CD8-positive, alpha-beta T cell (primary cell): ENCODE measurements at regions of chr19 and their contacts with region 1.

Region 1: DNA sequence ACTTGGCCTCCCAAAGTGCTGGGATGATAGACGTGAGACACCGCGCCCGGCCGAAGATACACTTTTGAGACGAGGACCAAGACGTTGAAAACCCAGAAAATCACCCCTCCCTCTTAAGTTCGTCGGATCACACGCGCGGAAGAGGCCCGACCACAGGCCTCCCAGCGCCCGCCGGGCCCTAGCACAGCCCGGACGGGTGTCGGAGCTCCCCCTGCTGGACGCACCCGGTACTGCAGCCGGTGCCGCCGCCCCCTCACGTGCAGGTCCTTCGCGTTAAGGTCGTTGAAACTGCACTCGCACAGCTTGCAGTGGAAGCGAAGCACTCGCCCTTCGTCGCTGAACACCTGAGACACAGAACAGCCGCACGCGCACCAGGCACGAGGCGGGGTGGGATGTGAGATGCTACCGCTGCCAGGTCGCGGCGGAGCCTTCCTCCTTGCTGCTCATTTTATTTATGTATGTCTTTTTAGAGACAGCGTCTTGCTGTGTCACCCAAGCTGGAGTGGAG is 35.7 kb upstream of the MATK start:
- DNase-seq: peak; percentile 84 to 98 (median 87)
- ATAC-seq: peak; percentile 99
- H3K4me3 ChIP-seq: peak overlapping the region in 1 of 2 experiments; percentile 30
- H3K4me3 Mint-ChIP-seq: peak overlapping the region; percentile 35
- H3K27ac ChIP-seq: no peak overlapping the region
- H3K27ac Mint-ChIP-seq: peak overlapping the region; percentile 64
- H3K4me1 ChIP-seq: peaks cover 32% of the 10 kb centered on the region
- H3K4me1 Mint-ChIP-seq: peaks cover 17% of the 10 kb centered on the region
- H3K27me3 ChIP-seq: no peaks in the 10 kb centered on the region
- H3K27me3 Mint-ChIP-seq: no peaks in the 10 kb centered on the region
- CTCF ChIP-seq: peak; percentile 98

Region 2: DNA sequence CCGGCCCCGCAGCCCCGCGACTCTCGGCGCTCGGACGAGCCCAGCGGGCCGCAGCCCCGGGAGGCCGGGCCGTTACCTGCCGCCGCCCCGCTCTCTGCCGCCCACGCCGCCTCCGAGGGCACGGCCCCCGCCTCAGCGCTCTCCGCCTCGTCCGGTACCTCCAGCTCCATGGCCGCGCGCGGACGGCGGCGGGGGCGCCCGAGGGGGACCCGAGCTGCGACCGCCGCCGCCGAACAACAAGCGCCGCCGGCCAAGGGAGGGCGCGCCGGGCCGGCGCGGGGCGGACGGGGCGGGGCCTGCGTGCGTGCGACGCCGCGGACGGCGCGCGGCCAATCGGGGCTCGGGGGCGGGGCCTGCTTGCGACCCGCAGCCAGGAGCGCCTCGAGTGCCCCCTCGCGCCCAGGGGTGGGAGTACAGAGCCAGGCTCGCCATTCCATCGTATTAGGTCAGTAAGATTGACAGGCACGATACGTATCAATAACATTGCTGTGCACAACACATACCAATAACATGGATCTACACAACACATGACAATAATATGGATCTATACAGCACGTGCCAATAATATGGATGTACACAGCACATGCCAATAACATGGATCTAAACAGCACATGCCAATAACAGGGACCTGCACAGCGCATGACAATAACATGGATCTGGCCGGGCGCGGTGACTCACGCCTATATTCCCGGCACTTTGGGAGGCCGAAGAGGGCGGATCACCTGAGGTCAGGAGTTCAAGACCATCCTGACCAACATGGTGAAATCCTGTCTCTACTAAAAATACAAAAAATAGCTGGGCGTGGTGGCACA is 121.5 kb before region 1 on chr19 and contains the start of gene PIP5K1C:
- CTCF ChIA-PET with region 1: interaction called, 4 read pairs
- POLR2A ChIA-PET with region 1: no interaction called
- intact Hi-C with region 1: loop called (anchors 5 kb)
- DNase-seq: peak; percentile 84 to 97 (median 92)
- ATAC-seq: peak; percentile 100
- H3K4me3 ChIP-seq: peak within 1 kb of the TSS; percentile 61 to 63
- H3K4me3 Mint-ChIP-seq: peak within 1 kb of the TSS; percentile 88
- H3K27ac ChIP-seq: no peak within 1 kb of the TSS
- H3K27ac Mint-ChIP-seq: peak within 1 kb of the TSS; percentile 81
- H3K4me1 ChIP-seq: peaks cover 19% of the 10 kb centered on the region
- H3K4me1 Mint-ChIP-seq: peaks cover 29% of the 10 kb centered on the region
- H3K27me3 ChIP-seq: no peaks in the 10 kb centered on the region
- H3K27me3 Mint-ChIP-seq: peaks cover 1% of the 10 kb centered on the region
- CTCF ChIP-seq: peak; percentile 82
- total RNA-seq, gene PIP5K1C: 11.4 to 12.2 TPM

Region 3: DNA sequence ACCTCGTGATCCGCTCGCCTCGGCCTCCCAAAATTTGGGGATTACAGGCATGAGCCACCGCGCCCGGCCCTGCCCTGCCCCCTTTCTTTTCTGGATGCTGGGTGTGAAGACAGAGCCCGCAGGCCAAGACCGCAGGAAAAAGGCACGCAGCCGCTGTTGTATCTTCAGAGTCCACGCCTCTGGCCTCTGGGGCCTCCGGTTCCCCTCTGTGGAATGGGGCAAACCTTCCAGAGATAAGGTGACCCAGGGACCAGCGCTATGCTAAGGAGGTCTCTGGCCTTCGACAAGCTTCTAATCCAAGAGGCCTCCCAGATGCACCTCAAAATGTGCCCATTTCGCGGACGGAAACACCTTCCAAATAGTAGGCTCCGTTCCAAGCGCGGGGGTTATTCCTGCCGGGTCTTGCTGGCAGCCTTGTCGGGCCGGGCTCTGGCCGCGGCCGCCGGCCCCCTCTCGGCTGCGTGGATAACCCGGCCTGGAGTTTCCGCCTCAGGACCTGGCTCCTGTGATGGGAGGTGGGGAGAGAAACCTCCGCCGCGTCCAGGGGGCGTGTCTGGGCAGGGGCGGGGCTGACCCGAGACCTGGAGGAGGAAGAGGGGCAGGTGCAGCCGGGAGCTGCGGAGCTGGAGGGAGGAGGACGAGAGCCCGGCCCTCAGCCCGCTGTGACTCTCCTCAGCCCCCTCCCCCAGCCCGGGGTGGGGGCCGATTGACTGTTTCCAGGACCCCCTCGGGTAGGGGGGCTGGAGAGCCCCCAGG is 100.6 kb before region 1 on chr19:
- CTCF ChIA-PET with region 1: interaction called, 5 read pairs
- POLR2A ChIA-PET with region 1: interaction called, 3 read pairs
- intact Hi-C with region 1: loop called in 1 of 2 experiments (anchors 5 kb)
- DNase-seq: peak; percentile 78 to 90 (median 85)
- ATAC-seq: peak; percentile 97
- H3K4me3 ChIP-seq: peak overlapping the region; percentile 55
- H3K4me3 Mint-ChIP-seq: peak overlapping the region; percentile 79
- H3K27ac ChIP-seq: no peak overlapping the region
- H3K27ac Mint-ChIP-seq: no peak overlapping the region
- H3K4me1 ChIP-seq: peaks cover 20% of the 10 kb centered on the region
- H3K4me1 Mint-ChIP-seq: peaks cover 6% of the 10 kb centered on the region
- H3K27me3 ChIP-seq: peaks cover 4 to 7% of the 10 kb centered on the region in 2 experiments
- H3K27me3 Mint-ChIP-seq: peaks cover 10% of the 10 kb centered on the region
- CTCF ChIP-seq: no peak

Region 4: DNA sequence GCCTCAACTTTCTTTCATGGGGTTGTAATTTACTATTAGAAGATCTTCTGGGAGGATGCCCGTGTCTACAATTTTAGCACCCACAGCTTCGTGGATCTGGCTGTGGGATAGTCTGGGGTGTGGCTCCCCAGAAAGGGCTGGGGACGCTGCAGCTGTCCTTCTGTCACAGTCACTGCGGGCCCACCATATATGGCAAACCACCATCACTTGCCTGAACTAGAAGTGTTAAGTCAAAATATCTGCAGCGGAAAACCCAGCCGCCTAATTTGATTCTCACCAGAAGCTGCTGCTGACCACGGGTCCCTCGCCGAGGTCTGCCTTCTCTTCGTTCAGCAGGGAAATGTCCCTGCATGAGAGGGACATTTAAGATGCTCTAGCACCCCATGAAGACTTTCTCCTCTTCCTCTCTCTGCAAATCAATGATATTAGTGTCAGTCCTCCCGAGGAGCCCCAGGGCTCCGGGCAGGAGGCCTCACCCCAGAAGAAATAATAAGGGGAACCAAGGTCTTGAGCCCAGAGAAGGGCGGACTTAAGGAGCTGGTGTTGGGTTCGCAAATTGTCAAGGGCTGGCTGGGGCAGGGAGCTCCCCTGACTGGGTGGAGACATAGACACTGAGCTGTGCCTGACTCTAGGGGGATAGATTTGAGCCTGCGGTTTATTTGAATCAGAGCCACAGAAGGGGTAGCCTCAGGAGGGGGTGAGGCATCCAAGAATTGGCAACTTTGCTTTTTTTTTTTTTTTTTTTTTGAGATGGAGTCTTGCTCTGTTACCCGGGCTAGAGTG is 32.7 kb before region 1 on chr19:
- CTCF ChIA-PET with region 1: interaction called, 24 read pairs
- POLR2A ChIA-PET with region 1: interaction called, 5 read pairs
- intact Hi-C with region 1: no loop called
- DNase-seq: peak in 6 of 9 experiments; percentile 26 to 89 (median 48)
- ATAC-seq: peak; percentile 39
- H3K4me3 ChIP-seq: peak overlapping the region in 1 of 2 experiments; percentile 9
- H3K4me3 Mint-ChIP-seq: peak overlapping the region; percentile 55
- H3K27ac ChIP-seq: peak overlapping the region; percentile 3 to 64
- H3K27ac Mint-ChIP-seq: peak overlapping the region; percentile 80
- H3K4me1 ChIP-seq: peaks cover 15% of the 10 kb centered on the region
- H3K4me1 Mint-ChIP-seq: peaks cover 26% of the 10 kb centered on the region
- H3K27me3 ChIP-seq: no peaks in the 10 kb centered on the region
- H3K27me3 Mint-ChIP-seq: no peaks in the 10 kb centered on the region
- CTCF ChIP-seq: no peak

Region 5: GRCh38 chr19:3809881-3810707 is 11.8 kb before region 1 on chr19:
- CTCF ChIA-PET with region 1: interaction called, 11 read pairs
- POLR2A ChIA-PET with region 1: interaction called, 7 read pairs
- intact Hi-C with region 1: no loop called
- DNase-seq: peak in 1 of 9 experiments; percentile 19
- ATAC-seq: no peak
- H3K4me3 ChIP-seq: no peak overlapping the region
- H3K4me3 Mint-ChIP-seq: no peak overlapping the region
- H3K27ac ChIP-seq: peak overlapping the region in 1 of 2 experiments; percentile 25
- H3K27ac Mint-ChIP-seq: no peak overlapping the region
- H3K4me1 ChIP-seq: peaks cover 48% of the 10 kb centered on the region
- H3K4me1 Mint-ChIP-seq: peaks cover 57% of the 10 kb centered on the region
- H3K27me3 ChIP-seq: no peaks in the 10 kb centered on the region
- H3K27me3 Mint-ChIP-seq: no peaks in the 10 kb centered on the region
- CTCF ChIP-seq: no peak